ENCODE measurements at regions of chr12 and their contacts with region 1.

Region 1: GRCh38 chr12:54368709-54369583 is 4.7 kb upstream of the GPR84 start:
- DNase-seq: peak; percentile 83 to 93 (median 90)
- H3K4me3 ChIP-seq: peak overlapping the region in 34 of 59 donors; percentile 4 to 66 (median 50)
- H3K27ac ChIP-seq: peak overlapping the region in 27 of 59 donors; percentile 2 to 72 (median 36)
- H3K27me3 ChIP-seq: no peaks in the 10 kb centered on the region
- CTCF ChIP-seq: peak; percentile 43 to 91 (median 80)

Region 2: DNA sequence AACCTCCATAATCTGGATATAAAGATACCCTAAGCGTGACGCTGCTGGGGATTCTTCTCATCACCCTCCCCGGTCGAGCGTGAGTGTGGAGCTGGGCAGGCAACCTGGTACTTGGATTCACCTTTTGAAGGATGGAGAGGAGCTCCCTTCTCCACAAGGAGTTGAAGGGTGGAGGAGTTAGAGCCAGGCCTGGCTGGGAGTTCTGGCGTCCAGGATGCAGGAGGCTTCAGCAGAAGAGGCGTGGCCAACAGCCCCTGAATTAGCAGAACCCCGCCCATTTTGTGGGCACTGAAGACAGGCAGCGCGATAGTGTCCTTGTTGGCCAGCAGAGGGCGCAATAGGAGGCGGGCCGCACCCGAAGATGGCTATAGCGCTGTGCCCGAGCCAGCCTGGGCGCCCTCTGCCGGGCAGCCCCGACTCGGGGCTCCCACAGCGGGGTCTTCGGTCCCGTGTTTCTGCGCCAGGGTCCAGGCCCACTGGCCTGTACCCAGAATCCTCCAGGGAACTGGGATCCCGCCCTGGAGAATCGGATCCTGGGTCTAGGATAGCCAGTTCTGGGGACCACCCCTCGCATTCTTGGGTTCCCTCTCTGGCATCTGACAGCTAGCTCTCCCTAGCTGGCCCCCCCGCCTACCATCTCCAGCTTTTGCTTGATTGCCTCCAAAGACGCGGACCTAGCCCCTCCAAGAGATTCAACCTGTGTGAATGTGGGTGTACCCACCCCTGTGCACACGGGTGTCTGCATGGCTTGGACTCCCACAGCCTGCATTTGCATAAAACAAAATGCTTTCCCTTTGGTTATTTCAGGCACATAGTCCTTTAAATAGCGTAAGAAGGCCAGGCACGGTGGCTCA is 154.2 kb before region 1 on chr12:
- intact Hi-C with region 1: loop called in 1 of 2 experiments (anchors 5 kb)
- DNase-seq: peak; percentile 67 to 90 (median 83)
- H3K4me3 ChIP-seq: peak overlapping the region in 48 of 59 donors; percentile 5 to 57 (median 40)
- H3K27ac ChIP-seq: peak overlapping the region in 3 of 59 donors; percentile 10 to 68 (median 27)
- H3K27me3 ChIP-seq: peaks cover 0 to 20% (median 0%) of the 10 kb centered on the region in 45 donors
- CTCF ChIP-seq: peak; percentile 66 to 100 (median 99)

Region 3: DNA sequence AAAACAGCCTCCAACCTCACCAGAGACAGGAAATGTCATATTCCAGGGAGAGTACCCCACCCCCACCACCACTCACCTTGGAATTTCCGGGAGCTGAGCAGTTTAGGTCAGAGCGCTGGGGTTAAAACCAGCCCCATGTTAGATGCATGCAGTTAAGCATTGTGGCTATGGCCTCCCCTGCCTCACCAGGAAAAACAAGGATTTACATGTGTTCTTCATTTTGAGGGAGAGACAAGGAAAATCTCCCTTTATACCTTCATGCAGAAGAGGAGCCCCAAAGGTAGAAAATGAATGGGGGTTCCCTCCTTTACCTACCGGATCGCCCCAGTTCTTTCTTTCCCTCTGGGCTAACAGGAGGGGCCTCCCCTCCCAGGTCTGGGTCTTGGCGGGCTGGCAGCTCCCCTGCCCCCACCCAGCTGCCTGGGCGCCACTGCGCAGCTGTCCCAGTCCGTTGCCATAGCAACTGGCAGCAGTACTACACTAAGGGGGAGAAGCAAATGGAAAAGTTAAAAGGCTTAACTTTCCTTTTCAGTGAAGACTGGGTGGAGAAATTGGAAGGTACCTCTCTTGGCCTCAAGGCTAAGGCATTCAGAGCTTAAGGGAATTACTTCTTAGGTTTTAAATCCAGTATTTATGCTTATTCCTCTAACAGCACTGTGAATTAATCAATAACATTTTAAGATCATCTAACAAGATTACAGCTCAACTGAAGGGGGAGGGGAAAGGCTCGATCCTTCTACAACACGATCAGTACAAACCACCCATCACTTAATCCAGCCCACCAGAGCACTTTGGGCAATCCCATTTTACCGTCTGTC is 109.5 kb before region 1 on chr12:
- intact Hi-C with region 1: loop called (anchors 10 kb)
- DNase-seq: peak; percentile 55 to 90 (median 83)
- H3K4me3 ChIP-seq: peak overlapping the region; percentile 25 to 77 (median 58)
- H3K27ac ChIP-seq: peak overlapping the region in 56 of 59 donors; percentile 6 to 89 (median 78)
- H3K27me3 ChIP-seq: no peaks in the 10 kb centered on the region
- CTCF ChIP-seq: peak in 11 of 56 donors; percentile 10 to 34 (median 21)

Region 4: DNA sequence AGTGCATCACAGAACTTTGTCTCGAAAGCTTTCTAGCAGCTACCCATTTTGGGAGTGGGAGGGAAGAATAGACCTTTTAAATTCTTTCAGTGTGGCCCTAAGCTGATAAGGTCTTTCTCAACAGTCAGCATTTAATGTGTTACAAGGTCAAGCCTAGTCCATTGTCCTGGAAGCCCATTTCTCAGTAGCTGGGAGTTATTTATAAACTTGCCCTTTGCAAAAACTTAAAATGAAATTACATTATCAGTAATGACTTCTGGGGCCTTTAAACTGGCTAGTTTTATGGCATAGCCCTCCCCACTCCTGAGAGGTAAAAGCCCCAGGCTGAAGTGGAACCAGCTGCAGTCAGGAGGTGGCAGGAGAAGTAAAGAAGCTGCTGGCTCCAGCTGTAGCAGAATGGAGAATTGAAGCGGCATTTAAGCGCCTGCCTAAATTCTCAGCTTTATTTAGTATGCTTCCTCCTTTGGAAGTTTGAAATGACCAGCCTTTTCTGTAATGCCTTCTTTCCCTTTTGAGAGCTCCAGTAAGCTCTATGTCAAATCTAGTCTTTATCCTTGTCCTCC is 31.6 kb before region 1 on chr12:
- intact Hi-C with region 1: loop called in 1 of 2 experiments (anchors 2 kb)
- DNase-seq: peak in 2 of 10 donors; percentile 27 to 40
- H3K4me3 ChIP-seq: no peak overlapping the region
- H3K27ac ChIP-seq: peak overlapping the region in 49 of 59 donors; percentile 2 to 76 (median 55)
- H3K27me3 ChIP-seq: no peaks in the 10 kb centered on the region
- CTCF ChIP-seq: peak in 38 of 56 donors; percentile 7 to 63 (median 31)

Region 5: GRCh38 chr12:54379401-54380201 is 10.7 kb after region 1 on chr12:
- intact Hi-C with region 1: loop called in 1 of 2 experiments (anchors 1 kb)
- DNase-seq: peak; percentile 78 to 93 (median 89)
- H3K4me3 ChIP-seq: peak overlapping the region; percentile 32 to 73 (median 58)
- H3K27ac ChIP-seq: peak overlapping the region in 54 of 59 donors; percentile 2 to 85 (median 66)
- H3K27me3 ChIP-seq: no peaks in the 10 kb centered on the region
- CTCF ChIP-seq: peak; percentile 89 to 100 (median 100)

Measured in dorsolateral prefrontal cortex (tissue), 120 donors.